ENCODE measurements at regions of chr12 and their contacts with region 1.

Region 1: DNA sequence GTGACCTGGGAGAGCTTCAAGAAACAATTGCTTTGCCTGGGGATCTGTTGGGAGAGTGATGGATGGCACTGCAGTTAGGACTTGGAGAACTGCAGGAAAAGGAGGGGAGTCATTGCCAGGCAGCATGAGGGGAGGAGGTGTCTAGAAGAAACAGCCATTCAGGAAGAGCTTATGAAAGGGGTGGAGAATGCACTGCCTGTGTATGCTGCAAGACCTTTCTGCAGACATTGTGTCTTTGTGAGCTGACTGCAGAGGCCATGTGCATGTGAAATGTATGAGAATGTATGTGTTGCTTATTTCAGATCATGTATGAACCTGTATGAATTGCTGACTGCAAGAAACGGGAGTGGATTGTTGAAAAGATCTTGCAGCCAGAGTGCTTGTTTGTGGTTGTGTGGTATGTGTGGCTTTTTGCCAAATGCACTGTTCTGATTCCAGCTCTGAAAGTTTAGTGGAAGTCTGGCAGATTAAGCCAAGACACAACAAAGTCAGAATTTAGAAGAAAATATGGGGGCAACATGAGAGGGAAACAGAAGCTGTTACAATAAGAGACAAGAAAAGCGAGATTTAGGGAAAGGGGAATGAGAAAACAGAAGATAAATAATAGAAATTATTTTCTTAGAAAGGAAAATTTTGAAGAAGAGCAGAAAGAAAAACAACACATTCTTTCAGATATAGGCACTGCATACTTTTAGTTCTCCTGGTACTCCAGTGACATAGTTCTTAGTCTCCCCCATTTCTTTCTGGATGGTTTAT is 9.8 kb upstream of the RIMKLB start:
- DNase-seq: peak in 2 of 3 donors; percentile 36 to 60
- ATAC-seq: peak; percentile 98
- H3K4me3 ChIP-seq: no peak overlapping the region
- H3K27ac ChIP-seq: peak overlapping the region; percentile 36
- H3K4me1 ChIP-seq: peaks cover 2% of the 10 kb centered on the region
- H3K27me3 ChIP-seq: no peaks in the 10 kb centered on the region

Region 2: GRCh38 chr12:8796831-8797626 is 109.0 kb after region 1 on chr12:
- intact Hi-C with region 1: no loop called
- DNase-seq: no peak
- ATAC-seq: no peak
- H3K4me3 ChIP-seq: no peak overlapping the region
- H3K27ac ChIP-seq: no peak overlapping the region
- H3K4me1 ChIP-seq: no peaks in the 10 kb centered on the region
- H3K27me3 ChIP-seq: no peaks in the 10 kb centered on the region

Region 3: GRCh38 chr12:8823565-8824300 is 135.7 kb after region 1 on chr12:
- intact Hi-C with region 1: loop called in 3 of 4 experiments (anchors 5 to 10 kb)
- DNase-seq: no peak
- ATAC-seq: peak; percentile 61 to 65
- H3K4me3 ChIP-seq: no peak overlapping the region
- H3K27ac ChIP-seq: no peak overlapping the region
- H3K4me1 ChIP-seq: no peaks in the 10 kb centered on the region
- H3K27me3 ChIP-seq: no peaks in the 10 kb centered on the region

Region 4: DNA sequence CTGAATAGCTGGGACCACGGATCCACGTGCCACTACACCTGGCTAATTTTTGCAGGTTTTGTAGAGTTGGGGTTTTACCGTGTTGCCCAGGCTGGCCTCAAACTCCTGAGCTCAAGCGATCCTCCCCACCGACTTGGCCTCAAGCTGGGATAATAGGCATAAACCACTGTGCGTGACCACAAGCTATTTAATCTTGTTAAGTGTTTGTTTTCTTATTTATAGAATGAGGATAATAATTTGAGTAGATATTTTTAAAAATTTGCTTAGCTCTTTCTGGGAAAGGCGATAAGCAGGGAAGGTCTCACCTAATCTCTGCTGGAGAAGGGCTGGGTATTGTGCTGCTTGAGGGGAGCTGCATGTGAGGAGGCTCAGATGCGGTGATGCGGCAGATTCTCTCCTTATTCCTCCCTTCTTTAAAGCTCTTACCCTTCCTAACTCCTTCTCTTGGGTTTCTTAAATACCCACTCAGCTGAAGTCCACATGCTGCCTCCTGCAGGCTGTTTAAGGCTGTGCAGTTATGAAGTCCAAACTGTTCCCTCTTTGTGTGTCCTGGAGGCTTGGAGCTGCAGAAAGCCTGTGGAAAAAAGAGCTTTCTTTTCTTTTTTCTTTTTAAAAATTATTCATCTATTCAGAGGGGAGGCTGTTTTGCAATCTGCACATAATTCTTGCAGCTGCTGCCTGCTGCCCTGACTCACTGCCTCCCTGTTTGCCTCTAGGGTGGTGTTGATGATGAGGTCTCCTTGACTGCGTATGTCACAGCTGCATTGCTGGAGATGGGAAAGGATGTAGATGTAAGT is 172.3 kb after region 1 on chr12:
- intact Hi-C with region 1: loop called in 1 of 4 experiments (anchors 10 kb)
- DNase-seq: peak in 1 of 3 donors; percentile 68
- ATAC-seq: peak in 1 of 2 donors; percentile 57
- H3K4me3 ChIP-seq: no peak overlapping the region
- H3K27ac ChIP-seq: no peak overlapping the region
- H3K4me1 ChIP-seq: no peaks in the 10 kb centered on the region
- H3K27me3 ChIP-seq: no peaks in the 10 kb centered on the region

Region 5: GRCh38 chr12:9039397-9039977 is 351.5 kb after region 1 on chr12:
- intact Hi-C with region 1: loop called in 2 of 4 experiments (anchors 10 kb)
- DNase-seq: no peak
- ATAC-seq: peak; percentile 57 to 71
- H3K4me3 ChIP-seq: no peak overlapping the region
- H3K27ac ChIP-seq: no peak overlapping the region
- H3K4me1 ChIP-seq: no peaks in the 10 kb centered on the region
- H3K27me3 ChIP-seq: no peaks in the 10 kb centered on the region

Region 6: GRCh38 chr12:9049520-9050133 is 361.6 kb after region 1 on chr12:
- intact Hi-C with region 1: loop called in 2 of 4 experiments (anchors 5 to 10 kb)
- DNase-seq: no peak
- ATAC-seq: no peak
- H3K4me3 ChIP-seq: no peak overlapping the region
- H3K27ac ChIP-seq: no peak overlapping the region
- H3K4me1 ChIP-seq: no peaks in the 10 kb centered on the region
- H3K27me3 ChIP-seq: no peaks in the 10 kb centered on the region